IMR-90 (cell line): ENCODE measurements at regions of chr13 and their contacts with region 1.

Region 1: GRCh38 chr13:46831588-46832194 is 34.7 kb upstream of the ESD start:
- DNase-seq: peak; percentile 58
- ATAC-seq: peak; percentile 79; the same call in 1 of the 2 replicates
- H3K4me3 ChIP-seq: no peak overlapping the region
- H3K27ac ChIP-seq: no peak overlapping the region
- H3K4me1 ChIP-seq: no peaks in the 10 kb centered on the region
- H3K27me3 ChIP-seq: no peaks in the 10 kb centered on the region; the same call in 1 of the 2 replicates
- CTCF ChIP-seq: peak; percentile 90
- POLR2A ChIP-seq: no peak
- RAD21 ChIP-seq: peak; percentile 90

Region 2: GRCh38 chr13:46804391-46804815 is 27.3 kb before region 1 on chr13:
- CTCF ChIA-PET with region 1: interaction called, 3 read pairs
- POLR2A ChIA-PET with region 1: no interaction called
- dilution Hi-C with region 1: no loop called
- in situ Hi-C with region 1: no loop called
- intact Hi-C with region 1: loop called (anchors 1 kb)
- DNase-seq: peak; percentile 98
- ATAC-seq: peak; percentile 90
- H3K4me3 ChIP-seq: no peak overlapping the region
- H3K27ac ChIP-seq: peak overlapping the region; percentile 54
- H3K4me1 ChIP-seq: peaks cover 9% of the 10 kb centered on the region
- H3K27me3 ChIP-seq: no peaks in the 10 kb centered on the region
- CTCF ChIP-seq: no peak
- POLR2A ChIP-seq: no peak
- RAD21 ChIP-seq: no peak

Region 3: DNA sequence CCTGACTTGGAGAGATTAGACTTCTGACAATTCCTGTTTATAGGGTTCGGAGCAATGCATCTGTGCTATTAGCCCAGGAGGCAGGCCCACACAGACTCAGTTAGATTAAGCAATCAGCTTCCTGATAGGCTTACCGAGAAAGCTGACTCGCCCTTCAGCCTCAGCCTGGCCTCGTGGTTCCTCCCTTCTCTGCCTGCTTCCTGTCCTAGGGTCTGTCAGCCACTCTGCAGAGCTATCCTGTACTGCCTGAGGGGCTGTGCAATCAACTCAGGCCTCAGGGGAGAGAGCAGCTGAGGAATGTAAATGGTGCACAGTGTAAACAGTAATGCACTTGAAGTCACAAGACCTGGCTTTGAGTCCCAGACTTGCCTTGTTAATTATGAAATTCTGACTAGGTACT is 34.5 kb after region 1 on chr13:
- CTCF ChIA-PET with region 1: no interaction called
- POLR2A ChIA-PET with region 1: no interaction called
- dilution Hi-C with region 1: no loop called
- in situ Hi-C with region 1: no loop called
- intact Hi-C with region 1: no loop called
- DNase-seq: peak; percentile 63
- ATAC-seq: peak; percentile 98
- H3K4me3 ChIP-seq: no peak overlapping the region
- H3K27ac ChIP-seq: no peak overlapping the region
- H3K4me1 ChIP-seq: no peaks in the 10 kb centered on the region
- H3K27me3 ChIP-seq: peaks cover 2% of the 10 kb centered on the region; the same call in 1 of the 2 replicates
- CTCF ChIP-seq: no peak
- POLR2A ChIP-seq: no peak
- RAD21 ChIP-seq: no peak

Region 4: DNA sequence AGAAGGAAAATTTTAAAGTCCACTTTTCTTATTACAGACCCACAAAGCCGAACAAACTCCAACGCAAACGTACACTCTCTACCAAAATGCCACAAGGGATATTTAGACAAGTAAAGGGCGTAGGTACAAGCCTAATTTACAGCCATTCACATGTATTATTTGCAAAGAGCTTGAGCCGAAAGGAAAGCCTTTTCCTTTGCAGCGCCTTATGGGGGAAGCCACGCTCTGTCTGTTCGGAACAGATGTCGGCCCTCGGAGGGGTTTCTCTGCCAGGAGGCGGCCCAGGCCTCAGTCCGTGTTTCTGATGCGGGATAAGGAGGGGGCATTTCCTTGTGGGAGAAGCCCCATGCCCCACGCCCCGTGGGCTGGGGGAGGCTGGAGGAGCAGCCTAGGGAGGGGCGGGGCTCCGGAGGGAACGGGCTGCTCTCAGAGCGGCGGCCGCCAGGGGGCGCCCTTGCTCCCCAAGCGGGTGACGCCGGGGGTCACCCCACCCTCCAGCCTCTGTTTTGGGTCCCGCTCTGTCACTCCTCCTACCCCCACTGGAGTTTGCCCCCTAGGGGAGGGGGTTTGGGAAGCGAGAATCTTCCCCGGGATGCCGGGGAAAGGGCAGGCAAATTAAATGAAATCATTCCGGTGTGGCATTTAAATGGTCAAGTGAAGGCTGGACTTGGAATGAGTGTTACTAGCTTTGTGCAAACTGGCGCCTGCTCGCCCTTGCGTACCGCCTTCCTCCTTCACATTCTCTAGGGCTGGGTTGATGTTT is 62.3 kb after region 1 on chr13:
- CTCF ChIA-PET with region 1: no interaction called
- POLR2A ChIA-PET with region 1: no interaction called
- dilution Hi-C with region 1: no loop called
- in situ Hi-C with region 1: no loop called
- intact Hi-C with region 1: loop called (anchors 5 kb)
- DNase-seq: peak; percentile 17
- ATAC-seq: peak; percentile 95
- H3K4me3 ChIP-seq: peak overlapping the region; percentile 63
- H3K27ac ChIP-seq: no peak overlapping the region; the same call in 1 of the 2 replicates
- H3K4me1 ChIP-seq: no peaks in the 10 kb centered on the region
- H3K27me3 ChIP-seq: peaks cover 20% of the 10 kb centered on the region
- CTCF ChIP-seq: peak; percentile 77
- POLR2A ChIP-seq: no peak
- RAD21 ChIP-seq: peak; percentile 62

Region 5: GRCh38 chr13:46953331-46953730 is 121.6 kb after region 1 on chr13:
- CTCF ChIA-PET with region 1: no interaction called
- POLR2A ChIA-PET with region 1: no interaction called
- dilution Hi-C with region 1: no loop called
- in situ Hi-C with region 1: no loop called
- intact Hi-C with region 1: no loop called
- DNase-seq: no peak
- ATAC-seq: no peak
- H3K4me3 ChIP-seq: no peak overlapping the region
- H3K27ac ChIP-seq: no peak overlapping the region
- H3K4me1 ChIP-seq: no peaks in the 10 kb centered on the region
- H3K27me3 ChIP-seq: no peaks in the 10 kb centered on the region
- CTCF ChIP-seq: no peak
- POLR2A ChIP-seq: no peak
- RAD21 ChIP-seq: no peak